Thyroid gland (tissue), 4 donors: ENCODE measurements at regions of chr4 and their contacts with region 1.

Region 1: GRCh38 chr4:184275766-184276165 is 58.1 kb upstream of the ENPP6 start:
- DNase-seq: no peak
- H3K4me3 ChIP-seq: no peak overlapping the region
- H3K27ac ChIP-seq: no peak overlapping the region
- H3K4me1 ChIP-seq: no peaks in the 10 kb centered on the region
- H3K27me3 ChIP-seq: no peaks in the 10 kb centered on the region
- CTCF ChIP-seq: no peak
- POLR2A ChIP-seq: no peak

Region 2: GRCh38 chr4:184196862-184197331 is 78.9 kb before region 1 on chr4:
- intact Hi-C with region 1: no loop called
- DNase-seq: no peak
- H3K4me3 ChIP-seq: no peak overlapping the region
- H3K27ac ChIP-seq: no peak overlapping the region
- H3K4me1 ChIP-seq: no peaks in the 10 kb centered on the region
- H3K27me3 ChIP-seq: no peaks in the 10 kb centered on the region
- CTCF ChIP-seq: no peak
- POLR2A ChIP-seq: no peak

Region 3: DNA sequence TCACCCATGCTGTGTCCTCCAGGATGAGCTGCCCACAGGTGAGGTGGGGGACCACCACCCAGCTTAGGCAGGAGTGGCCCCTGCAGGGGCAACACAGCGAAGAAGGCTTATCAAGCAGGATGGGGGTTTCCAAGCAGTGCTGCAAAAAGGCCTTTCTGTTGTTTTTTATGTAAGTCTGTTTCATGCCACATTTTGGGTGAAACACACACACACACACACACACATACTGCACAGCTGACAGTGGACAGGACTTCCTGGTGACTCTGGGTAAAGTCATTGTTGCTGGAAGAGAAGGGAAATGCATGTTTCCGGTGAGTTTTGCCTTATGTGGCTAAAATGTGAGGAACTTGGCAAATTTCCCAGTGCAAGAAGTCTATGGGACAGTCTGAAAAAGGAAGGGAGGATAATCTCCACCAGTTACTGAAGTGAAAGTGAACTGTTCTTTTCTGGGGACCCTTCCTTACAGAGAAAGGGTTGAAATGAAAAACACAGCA is 79.4 kb after region 1 on chr4:
- intact Hi-C with region 1: no loop called
- DNase-seq: peak in 1 of 2 donors; percentile 33
- H3K4me3 ChIP-seq: no peak overlapping the region
- H3K27ac ChIP-seq: peak overlapping the region in 2 of 3 donors; percentile 36 to 49
- H3K4me1 ChIP-seq: peaks cover 0 to 13% of the 10 kb centered on the region in 2 donors
- H3K27me3 ChIP-seq: no peaks in the 10 kb centered on the region
- CTCF ChIP-seq: no peak
- POLR2A ChIP-seq: no peak

Region 4: DNA sequence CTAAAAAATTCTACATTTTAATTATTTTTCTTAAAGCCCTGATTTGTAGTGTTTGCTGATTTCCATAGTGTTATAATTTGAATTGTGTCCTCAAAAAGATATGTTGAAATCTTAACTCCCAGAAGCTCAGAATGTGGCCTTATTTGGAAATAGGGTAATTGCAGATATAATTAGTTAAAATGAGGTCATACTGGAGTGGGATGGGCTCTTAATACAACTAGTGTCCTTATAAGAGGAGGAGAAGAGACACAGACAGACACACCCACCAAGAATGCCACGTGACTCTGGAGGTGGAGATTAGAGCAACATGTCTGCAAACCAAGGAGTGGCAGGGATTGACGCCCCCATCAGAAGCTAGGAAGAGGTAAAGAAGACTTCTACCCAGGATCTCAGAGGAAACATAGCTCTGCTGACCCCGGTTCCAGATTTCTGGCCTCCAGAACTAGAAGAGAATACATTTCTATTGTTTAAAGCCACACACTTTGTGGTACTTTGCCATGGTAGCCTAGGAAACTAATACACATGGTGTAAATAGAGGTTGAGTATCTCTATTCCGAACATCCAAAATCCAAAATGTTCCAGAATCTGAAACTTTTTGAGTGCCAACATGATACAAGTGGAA is 269.1 kb after region 1 on chr4:
- intact Hi-C with region 1: loop called (anchors 5 kb)
- DNase-seq: no peak
- H3K4me3 ChIP-seq: no peak overlapping the region
- H3K27ac ChIP-seq: no peak overlapping the region
- H3K4me1 ChIP-seq: no peaks in the 10 kb centered on the region
- H3K27me3 ChIP-seq: no peaks in the 10 kb centered on the region
- CTCF ChIP-seq: no peak
- POLR2A ChIP-seq: no peak